Endothelial cell of umbilical vein (primary cell): ENCODE measurements at regions of chr14 and their contacts with region 1.

Region 1: GRCh38 chr14:55129428-55130195 is 560 bp downstream of the LGALS3 start:
- DNase-seq: peak; percentile 61
- H3K4me3 ChIP-seq: peak overlapping the region; percentile 4 to 56 (median 20)
- H3K27ac ChIP-seq: peak overlapping the region; percentile 3
- H3K4me1 ChIP-seq: peaks cover 3% of the 10 kb centered on the region
- H3K27me3 ChIP-seq: no peaks in the 10 kb centered on the region
- CTCF ChIP-seq: no peak
- POLR2A ChIP-seq: no peak

Region 2: DNA sequence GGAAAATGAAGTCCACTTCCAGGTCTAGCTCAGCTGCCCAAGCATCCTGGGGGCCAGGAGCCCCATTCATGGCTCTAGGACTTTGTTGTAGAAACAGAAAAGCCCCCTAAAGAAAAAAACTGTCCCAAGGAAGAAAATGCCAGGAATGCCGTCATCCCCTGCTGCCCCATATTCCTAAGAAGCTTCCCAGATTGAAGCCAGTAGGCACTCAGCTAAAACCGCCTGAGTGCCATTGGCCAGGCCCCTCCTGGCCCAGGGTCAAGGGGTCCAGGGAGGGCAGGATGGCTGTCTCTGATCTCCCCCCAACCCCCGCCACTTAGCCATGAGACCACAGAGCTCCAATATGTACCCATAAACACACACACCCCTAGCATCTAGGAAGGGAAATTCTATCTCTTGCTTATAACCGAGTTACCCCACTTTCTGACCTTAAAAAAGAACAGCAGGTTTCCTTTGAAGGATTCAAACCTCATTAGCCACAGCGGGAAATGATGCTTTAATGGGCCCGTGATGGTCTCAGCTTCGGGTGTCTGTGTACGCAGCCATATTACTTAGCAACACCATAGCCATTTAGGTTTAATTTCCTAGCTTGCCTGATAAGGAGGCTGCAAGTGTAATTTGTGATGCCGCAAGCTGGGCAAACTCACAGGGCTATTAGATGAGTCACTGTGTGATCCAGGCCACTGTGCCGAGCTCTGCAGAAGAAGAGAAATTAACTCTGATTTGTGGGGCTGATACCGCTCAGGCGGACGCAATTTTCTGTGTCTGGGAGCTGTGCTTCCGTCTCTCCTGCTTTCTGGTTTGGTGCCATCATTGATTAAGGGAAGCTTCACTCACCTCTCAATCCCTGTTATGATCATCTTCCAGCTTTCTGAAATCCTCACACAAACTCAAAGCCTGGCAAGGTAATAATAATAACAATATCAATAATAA is 311.1 kb before region 1 on chr14:
- CTCF ChIA-PET with region 1: no interaction called
- POLR2A ChIA-PET with region 1: no interaction called
- dilution Hi-C with region 1: no loop called
- intact Hi-C with region 1: no loop called
- DNase-seq: peak; percentile 20
- H3K4me3 ChIP-seq: no peak overlapping the region
- H3K27ac ChIP-seq: no peak overlapping the region
- H3K4me1 ChIP-seq: no peaks in the 10 kb centered on the region
- H3K27me3 ChIP-seq: peaks cover 2 to 9% of the 10 kb centered on the region in 2 experiments
- CTCF ChIP-seq: no peak
- POLR2A ChIP-seq: no peak

Region 3: GRCh38 chr14:55059333-55059732 is 70.3 kb before region 1 on chr14:
- CTCF ChIA-PET with region 1: no interaction called
- POLR2A ChIA-PET with region 1: no interaction called
- dilution Hi-C with region 1: no loop called
- intact Hi-C with region 1: no loop called
- DNase-seq: no peak
- H3K4me3 ChIP-seq: no peak overlapping the region
- H3K27ac ChIP-seq: no peak overlapping the region
- H3K4me1 ChIP-seq: no peaks in the 10 kb centered on the region
- H3K27me3 ChIP-seq: no peaks in the 10 kb centered on the region
- CTCF ChIP-seq: no peak
- POLR2A ChIP-seq: no peak

Region 4: GRCh38 chr14:55094321-55095157 is 35.1 kb before region 1 on chr14:
- CTCF ChIA-PET with region 1: interaction called, 3 read pairs
- POLR2A ChIA-PET with region 1: interaction called, 3 read pairs
- dilution Hi-C with region 1: no loop called
- intact Hi-C with region 1: loop called (anchors 1 kb)
- DNase-seq: no peak
- H3K4me3 ChIP-seq: no peak overlapping the region
- H3K27ac ChIP-seq: no peak overlapping the region
- H3K4me1 ChIP-seq: no peaks in the 10 kb centered on the region
- H3K27me3 ChIP-seq: no peaks in the 10 kb centered on the region
- CTCF ChIP-seq: no peak
- POLR2A ChIP-seq: no peak

Region 5: GRCh38 chr14:55102141-55102621 is 27.4 kb before region 1 on chr14:
- CTCF ChIA-PET with region 1: interaction called, 4 read pairs
- POLR2A ChIA-PET with region 1: interaction called, 3 read pairs
- dilution Hi-C with region 1: no loop called
- intact Hi-C with region 1: loop called (anchors 1 kb)
- DNase-seq: peak; percentile 98
- H3K4me3 ChIP-seq: no peak overlapping the region
- H3K27ac ChIP-seq: peak overlapping the region; percentile 98
- H3K4me1 ChIP-seq: peaks cover 26% of the 10 kb centered on the region
- H3K27me3 ChIP-seq: no peaks in the 10 kb centered on the region
- CTCF ChIP-seq: no peak
- POLR2A ChIP-seq: peak; percentile 58

Region 6: DNA sequence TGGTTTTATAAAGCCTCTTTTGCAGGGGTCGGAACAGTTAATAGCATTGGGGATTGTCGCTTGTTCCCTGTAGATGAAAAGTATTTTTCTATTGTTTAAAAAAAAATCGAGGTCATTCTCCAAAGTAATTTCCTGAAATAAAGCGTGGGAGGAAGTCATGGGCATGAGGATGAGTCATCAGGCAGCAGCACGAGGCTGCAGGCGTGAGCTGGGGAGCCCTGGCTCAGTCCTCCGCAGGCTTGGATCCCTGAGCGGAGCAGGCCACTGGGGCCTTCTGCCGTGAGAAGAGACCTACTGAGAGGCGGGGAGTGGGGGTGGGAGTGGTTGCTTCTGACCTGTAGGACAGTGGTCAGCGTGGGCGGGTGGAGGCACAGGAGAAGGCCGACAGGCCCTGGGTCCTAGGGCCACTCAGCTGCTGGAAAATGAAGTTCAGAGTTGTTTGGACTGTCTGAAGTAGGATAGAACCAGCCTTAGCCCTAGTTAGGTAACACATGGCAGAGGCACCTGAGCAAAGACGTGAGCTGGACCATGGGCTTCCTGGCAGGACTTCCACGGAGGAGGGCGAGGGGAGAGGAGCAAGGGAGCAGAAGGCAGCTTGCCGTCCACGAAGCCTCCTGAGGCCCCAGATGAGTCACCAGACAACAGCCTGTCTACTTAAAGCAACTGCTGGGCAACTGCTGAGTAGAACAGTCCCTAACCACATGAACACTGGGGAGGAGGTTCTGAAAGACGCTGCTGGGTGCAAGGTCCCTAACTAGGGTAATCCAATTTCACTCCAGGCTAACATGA is 21.7 kb before region 1 on chr14:
- CTCF ChIA-PET with region 1: interaction called, 3 read pairs
- POLR2A ChIA-PET with region 1: interaction called, 3 read pairs
- dilution Hi-C with region 1: no loop called
- intact Hi-C with region 1: loop called (anchors 1 kb)
- DNase-seq: peak; percentile 94
- H3K4me3 ChIP-seq: no peak overlapping the region
- H3K27ac ChIP-seq: peak overlapping the region; percentile 99
- H3K4me1 ChIP-seq: peaks cover 26% of the 10 kb centered on the region
- H3K27me3 ChIP-seq: no peaks in the 10 kb centered on the region
- CTCF ChIP-seq: no peak
- POLR2A ChIP-seq: no peak